ENCODE measurements at regions of chr4 and their contacts with region 1.

Region 1: DNA sequence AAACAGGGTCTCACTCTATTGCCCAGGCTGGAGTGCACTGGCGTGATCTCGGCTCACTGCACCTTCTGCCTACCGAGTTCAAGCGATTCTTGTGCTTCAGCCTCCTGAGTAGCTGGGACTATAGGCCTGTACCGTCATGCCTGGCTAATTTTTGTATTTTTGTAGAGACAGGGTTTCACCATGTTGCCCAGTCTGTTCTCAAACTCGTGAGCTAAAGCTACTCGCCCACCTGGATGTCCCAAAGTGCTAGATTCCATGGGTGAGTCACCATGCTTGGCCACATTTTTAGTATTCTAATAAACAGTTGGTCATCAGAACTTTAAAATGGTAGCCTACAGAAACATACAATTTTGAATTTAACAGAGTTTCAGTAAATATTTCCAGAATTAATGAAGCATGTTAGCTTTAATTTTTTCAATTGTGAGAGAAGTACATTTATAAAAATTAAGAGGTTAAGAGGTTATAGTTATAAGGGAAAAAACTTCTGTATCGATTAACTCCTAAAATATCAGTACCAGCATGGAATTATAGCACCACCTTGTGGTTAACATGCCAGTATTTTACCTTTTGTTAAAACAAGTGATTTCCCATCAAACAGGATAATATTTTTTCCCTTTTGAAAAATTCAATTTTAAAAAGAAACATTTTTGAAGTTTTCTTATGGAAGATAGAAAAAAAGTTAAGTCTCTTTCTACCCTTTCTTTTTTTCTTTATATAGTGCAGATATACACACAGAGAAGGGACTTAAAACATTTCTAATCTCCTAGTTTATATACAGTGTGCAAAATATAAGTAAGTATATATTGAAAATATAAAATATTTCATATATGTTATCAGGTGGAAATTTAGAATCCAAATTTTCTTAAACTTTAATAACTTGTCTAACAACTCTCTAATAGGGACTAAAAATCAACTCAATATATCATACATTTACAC is 35.4 kb downstream of the CEP44 start:
- DNase-seq: peak; percentile 45
- H3K4me3 ChIP-seq: no peak overlapping the region
- H3K27ac ChIP-seq: no peak overlapping the region
- H3K4me1 ChIP-seq: peaks cover 3% of the 10 kb centered on the region
- H3K27me3 ChIP-seq: no peaks in the 10 kb centered on the region
- CTCF ChIP-seq: peak; percentile 21 to 25
- POLR2A ChIP-seq: no peak

Region 2: GRCh38 chr4:174120446-174121295 is 198.4 kb before region 1 on chr4:
- CTCF ChIA-PET with region 1: no interaction called
- POLR2A ChIA-PET with region 1: no interaction called
- dilution Hi-C with region 1: no loop called
- intact Hi-C with region 1: loop called (anchors 10 kb)
- DNase-seq: peak; percentile 65
- H3K4me3 ChIP-seq: peak overlapping the region in 1 of 3 experiments; percentile 39
- H3K27ac ChIP-seq: no peak overlapping the region
- H3K4me1 ChIP-seq: no peaks in the 10 kb centered on the region
- H3K27me3 ChIP-seq: peaks cover 7 to 26% of the 10 kb centered on the region in 2 experiments
- CTCF ChIP-seq: peak; percentile 45 to 50
- POLR2A ChIP-seq: no peak

Region 3: GRCh38 chr4:174156239-174156826 is 162.8 kb before region 1 on chr4:
- CTCF ChIA-PET with region 1: no interaction called
- POLR2A ChIA-PET with region 1: no interaction called
- dilution Hi-C with region 1: no loop called
- intact Hi-C with region 1: loop called (anchors 1 kb)
- DNase-seq: peak; percentile 62
- H3K4me3 ChIP-seq: no peak overlapping the region
- H3K27ac ChIP-seq: no peak overlapping the region
- H3K4me1 ChIP-seq: no peaks in the 10 kb centered on the region
- H3K27me3 ChIP-seq: peaks cover 2 to 8% of the 10 kb centered on the region in 2 experiments
- CTCF ChIP-seq: peak; percentile 14 to 55
- POLR2A ChIP-seq: no peak

Region 4: DNA sequence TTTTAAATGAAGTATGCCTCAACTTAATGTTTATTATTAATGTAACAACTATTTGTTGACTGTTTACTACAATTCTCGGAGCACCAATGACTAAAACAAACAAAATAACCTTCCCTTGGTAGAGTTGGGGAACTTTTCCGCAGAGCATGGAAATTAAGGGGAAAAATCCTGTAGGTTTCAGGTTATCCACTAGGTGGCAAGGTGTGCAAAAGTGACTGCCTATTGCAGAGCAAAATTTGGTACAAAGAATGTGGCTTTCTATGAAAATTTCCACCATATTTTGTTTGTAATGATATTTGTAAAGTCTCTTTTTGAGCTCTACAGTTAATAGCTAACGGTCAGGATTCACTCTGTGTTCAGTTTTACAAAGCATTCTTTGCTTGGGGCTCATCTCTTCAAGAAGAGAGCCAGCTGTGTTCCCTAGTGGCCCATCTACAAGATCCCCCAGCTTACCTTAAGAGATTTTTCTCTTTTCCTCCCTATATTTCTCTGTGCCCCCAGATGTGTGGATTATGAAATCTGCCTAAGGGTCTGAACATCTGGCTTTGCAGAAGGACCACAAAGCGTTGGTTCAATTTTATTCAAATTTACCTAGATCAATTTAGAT is 96.7 kb before region 1 on chr4:
- CTCF ChIA-PET with region 1: interaction called, 5 read pairs
- POLR2A ChIA-PET with region 1: no interaction called
- dilution Hi-C with region 1: no loop called
- intact Hi-C with region 1: loop called (anchors 1 kb)
- DNase-seq: peak; percentile 36
- H3K4me3 ChIP-seq: no peak overlapping the region
- H3K27ac ChIP-seq: no peak overlapping the region
- H3K4me1 ChIP-seq: peaks cover 11% of the 10 kb centered on the region
- H3K27me3 ChIP-seq: peaks cover 27 to 67% of the 10 kb centered on the region in 2 experiments
- CTCF ChIP-seq: peak; percentile 43 to 55
- POLR2A ChIP-seq: no peak

Region 5: GRCh38 chr4:174714393-174715211 is 395.5 kb after region 1 on chr4:
- CTCF ChIA-PET with region 1: no interaction called
- POLR2A ChIA-PET with region 1: no interaction called
- dilution Hi-C with region 1: no loop called
- intact Hi-C with region 1: no loop called
- DNase-seq: peak; percentile 10
- H3K4me3 ChIP-seq: no peak overlapping the region
- H3K27ac ChIP-seq: no peak overlapping the region
- H3K4me1 ChIP-seq: no peaks in the 10 kb centered on the region
- H3K27me3 ChIP-seq: no peaks in the 10 kb centered on the region
- CTCF ChIP-seq: peak; percentile 30 to 55
- POLR2A ChIP-seq: no peak

Region 6: GRCh38 chr4:174910271-174910670 is 591.2 kb after region 1 on chr4:
- CTCF ChIA-PET with region 1: no interaction called
- POLR2A ChIA-PET with region 1: no interaction called
- dilution Hi-C with region 1: no loop called
- intact Hi-C with region 1: no loop called
- DNase-seq: no peak
- H3K4me3 ChIP-seq: no peak overlapping the region
- H3K27ac ChIP-seq: no peak overlapping the region
- H3K4me1 ChIP-seq: no peaks in the 10 kb centered on the region
- H3K27me3 ChIP-seq: no peaks in the 10 kb centered on the region
- CTCF ChIP-seq: no peak
- POLR2A ChIP-seq: no peak